ENCODE measurements at regions of chr6 and their contacts with region 1.

Region 1: GRCh38 chr6:55886185-55886836 is 10.9 kb upstream of the BMP5 start:
- DNase-seq: peak in 2 of 5 donors; percentile 40 to 45
- H3K4me3 ChIP-seq: no peak overlapping the region
- H3K27ac ChIP-seq: no peak overlapping the region
- H3K4me1 ChIP-seq: no peaks in the 10 kb centered on the region
- H3K27me3 ChIP-seq: no peaks in the 10 kb centered on the region
- CTCF ChIP-seq: no peak

Region 2: DNA sequence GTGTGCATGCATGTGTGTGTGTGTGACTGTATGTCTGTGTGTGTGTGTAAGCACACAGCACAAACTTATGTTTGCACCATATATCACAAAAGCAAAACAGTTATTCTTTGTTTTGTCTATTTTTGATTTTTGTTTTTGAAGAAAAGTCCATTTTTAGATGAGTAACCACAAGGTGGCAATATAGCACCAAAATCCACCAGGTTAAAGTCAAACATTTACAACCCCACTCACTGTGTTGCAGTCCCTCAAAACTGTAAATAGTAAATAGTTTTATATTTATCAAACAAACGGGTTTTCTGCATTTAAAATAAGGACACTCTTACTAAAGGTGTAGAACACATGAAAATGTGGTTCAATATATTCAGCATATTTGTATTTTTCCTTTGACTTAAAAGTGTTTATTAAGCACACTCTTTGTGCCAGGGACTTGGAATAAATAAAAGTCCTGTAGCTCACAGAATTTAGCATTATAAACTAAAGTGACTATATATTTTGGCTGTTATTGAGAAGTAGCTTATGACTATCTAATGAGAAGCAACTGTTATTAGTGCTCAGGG is 440.6 kb before region 1 on chr6:
- intact Hi-C with region 1: loop called (anchors 10 kb)
- DNase-seq: peak in 2 of 5 donors; percentile 65 to 69
- H3K4me3 ChIP-seq: no peak overlapping the region
- H3K27ac ChIP-seq: no peak overlapping the region
- H3K4me1 ChIP-seq: no peaks in the 10 kb centered on the region
- H3K27me3 ChIP-seq: no peaks in the 10 kb centered on the region
- CTCF ChIP-seq: peak; percentile 35

Region 3: GRCh38 chr6:56101141-56101553 is 214.8 kb after region 1 on chr6:
- intact Hi-C with region 1: no loop called
- DNase-seq: no peak
- H3K4me3 ChIP-seq: no peak overlapping the region
- H3K27ac ChIP-seq: no peak overlapping the region
- H3K4me1 ChIP-seq: no peaks in the 10 kb centered on the region
- H3K27me3 ChIP-seq: no peaks in the 10 kb centered on the region
- CTCF ChIP-seq: no peak

Measured in kidney (tissue), 22 donors.